A549 (cell line): ENCODE measurements at regions of chr17 and their contacts with region 1.

Region 1: GRCh38 chr17:40371261-40371929 is 6.9 kb upstream of the GJD3 start:
- DNase-seq: peak in 1 of 2 experiments; percentile 70
- ATAC-seq: peak; percentile 59 to 69; a peak in 5 of 6 replicates
- H3K4me3 ChIP-seq: no peak overlapping the region
- H3K27ac ChIP-seq: no peak overlapping the region
- H3K4me1 ChIP-seq: peaks cover 9% of the 10 kb centered on the region; the same call in 1 of the 3 replicates
- CTCF ChIP-seq: no peak
- EP300 ChIP-seq: no peak
- POLR2A ChIP-seq: no peak
- RAD21 ChIP-seq: no peak

Region 2: GRCh38 chr17:40209404-40210093 is 161.8 kb before region 1 on chr17:
- CTCF ChIA-PET with region 1: no interaction called
- POLR2A ChIA-PET with region 1: no interaction called
- DNase-seq: no peak
- ATAC-seq: peak; percentile 36 to 54; a peak in 5 of 6 replicates
- H3K4me3 ChIP-seq: no peak overlapping the region
- H3K27ac ChIP-seq: no peak overlapping the region
- H3K4me1 ChIP-seq: no peaks in the 10 kb centered on the region
- CTCF ChIP-seq: no peak
- EP300 ChIP-seq: no peak
- POLR2A ChIP-seq: no peak
- RAD21 ChIP-seq: no peak

Region 3: DNA sequence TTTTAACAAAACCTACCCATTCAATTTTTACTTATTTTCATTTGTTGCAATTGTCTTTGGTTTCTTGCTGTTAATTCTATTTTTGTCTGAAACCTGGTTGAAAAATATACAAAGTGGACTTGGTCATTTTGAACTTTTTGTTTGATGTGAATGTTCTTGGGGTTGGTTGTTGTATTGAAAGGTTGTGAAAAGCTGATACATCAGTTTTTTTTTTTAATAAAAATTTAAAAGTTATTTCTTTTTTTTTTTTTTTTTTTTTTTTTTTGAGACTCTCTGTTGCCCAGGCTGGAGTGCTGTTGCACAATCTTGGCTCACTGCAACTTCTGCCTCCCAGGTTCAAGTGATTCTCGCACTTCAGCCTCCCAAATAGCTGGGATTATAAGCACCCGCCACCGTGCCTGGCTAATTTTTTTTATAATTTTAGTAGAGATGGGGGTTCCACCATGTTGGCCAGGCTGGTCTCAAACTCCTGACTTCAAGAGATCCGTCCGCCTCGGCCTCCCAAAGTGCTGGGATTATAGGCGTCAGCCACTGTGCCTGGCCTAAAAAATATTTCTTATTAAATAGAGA is 123.4 kb before region 1 on chr17:
- CTCF ChIA-PET with region 1: no interaction called
- POLR2A ChIA-PET with region 1: no interaction called
- DNase-seq: no peak
- ATAC-seq: no peak
- H3K4me3 ChIP-seq: no peak overlapping the region
- H3K27ac ChIP-seq: no peak overlapping the region
- H3K4me1 ChIP-seq: peaks cover 13% of the 10 kb centered on the region
- CTCF ChIP-seq: no peak
- EP300 ChIP-seq: no peak
- POLR2A ChIP-seq: no peak
- RAD21 ChIP-seq: no peak

Region 4: GRCh38 chr17:40355123-40355803 is 16.1 kb before region 1 on chr17:
- CTCF ChIA-PET with region 1: interaction called, 20 read pairs
- POLR2A ChIA-PET with region 1: no interaction called
- DNase-seq: peak; percentile 77 to 97
- ATAC-seq: peak; percentile 58 to 84
- H3K4me3 ChIP-seq: no peak overlapping the region
- H3K27ac ChIP-seq: peak overlapping the region in 1 of 2 experiments; percentile 62; a peak in 3 of 6 replicates
- H3K4me1 ChIP-seq: peaks cover 52% of the 10 kb centered on the region
- CTCF ChIP-seq: peak; percentile 98
- EP300 ChIP-seq: no peak
- POLR2A ChIP-seq: no peak
- RAD21 ChIP-seq: peak; percentile 99 to 100

Region 5: GRCh38 chr17:40637931-40638330 is 266.5 kb after region 1 on chr17:
- CTCF ChIA-PET with region 1: no interaction called
- POLR2A ChIA-PET with region 1: no interaction called
- DNase-seq: no peak
- ATAC-seq: no peak
- H3K4me3 ChIP-seq: no peak overlapping the region
- H3K27ac ChIP-seq: no peak overlapping the region
- H3K4me1 ChIP-seq: no peaks in the 10 kb centered on the region
- CTCF ChIP-seq: no peak
- EP300 ChIP-seq: no peak
- POLR2A ChIP-seq: no peak
- RAD21 ChIP-seq: no peak